Naive thymus-derived CD4-positive, alpha-beta T cell (primary cell): ENCODE measurements at regions of chr7 and their contacts with region 1.

Region 1: DNA sequence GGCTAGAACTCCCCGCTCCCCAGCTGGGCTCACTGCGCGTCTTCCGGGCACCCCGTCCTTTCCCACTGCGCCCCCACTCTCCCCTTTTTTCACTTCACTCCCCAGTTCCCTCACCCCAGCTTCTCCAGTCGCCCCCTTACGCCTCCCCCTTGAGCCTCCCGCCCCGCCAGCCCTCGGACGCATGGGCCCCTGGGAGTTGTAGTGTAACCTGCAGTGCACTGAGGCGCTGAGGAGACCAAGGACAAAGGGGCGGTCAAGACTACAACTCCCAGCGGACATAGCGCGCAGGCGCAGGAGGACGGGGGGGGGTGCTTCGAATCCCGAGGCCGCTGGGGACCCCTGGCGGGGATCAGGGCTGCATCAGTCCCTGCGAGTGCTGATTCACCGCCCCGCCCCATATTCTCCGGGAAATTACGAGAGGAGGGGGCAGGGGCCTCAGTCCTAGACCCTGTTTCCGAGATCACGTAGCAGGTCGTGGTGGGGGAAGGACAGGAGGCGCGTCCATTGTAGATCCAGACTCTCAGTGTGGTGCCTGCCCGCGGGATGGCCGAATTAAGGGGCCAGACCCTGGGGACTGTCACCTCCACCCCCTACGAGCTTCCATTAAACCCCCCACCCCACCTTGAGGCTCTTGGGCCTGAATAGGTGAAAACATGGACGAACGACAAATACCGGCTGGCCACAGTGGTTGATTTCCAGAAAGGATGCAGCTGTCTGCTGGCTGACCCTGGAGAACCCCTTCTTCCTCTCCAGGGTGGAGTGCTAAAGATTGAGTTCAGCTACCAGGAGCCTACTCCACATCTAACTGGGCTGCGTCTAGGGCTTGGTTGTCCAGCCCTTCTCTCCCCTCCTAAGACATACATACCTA is 554 bp upstream of the YWHAG start:
- DNase-seq: peak; percentile 87 to 96 (median 95)
- ATAC-seq: peak; percentile 94
- H3K4me3 ChIP-seq: peak overlapping the region; percentile 72
- H3K4me3 Mint-ChIP-seq: peak overlapping the region; percentile 84 to 99 (median 95)
- H3K27ac ChIP-seq: peak overlapping the region; percentile 92
- H3K27ac Mint-ChIP-seq: peak overlapping the region; percentile 66 to 99 (median 93)
- H3K4me1 ChIP-seq: peaks cover 4 to 31% of the 10 kb centered on the region in 2 donors
- H3K4me1 Mint-ChIP-seq: peaks cover 28 to 46% (median 43%) of the 10 kb centered on the region in 7 donors
- H3K27me3 ChIP-seq: no peaks in the 10 kb centered on the region
- H3K27me3 Mint-ChIP-seq: no peaks in the 10 kb centered on the region

Region 2: DNA sequence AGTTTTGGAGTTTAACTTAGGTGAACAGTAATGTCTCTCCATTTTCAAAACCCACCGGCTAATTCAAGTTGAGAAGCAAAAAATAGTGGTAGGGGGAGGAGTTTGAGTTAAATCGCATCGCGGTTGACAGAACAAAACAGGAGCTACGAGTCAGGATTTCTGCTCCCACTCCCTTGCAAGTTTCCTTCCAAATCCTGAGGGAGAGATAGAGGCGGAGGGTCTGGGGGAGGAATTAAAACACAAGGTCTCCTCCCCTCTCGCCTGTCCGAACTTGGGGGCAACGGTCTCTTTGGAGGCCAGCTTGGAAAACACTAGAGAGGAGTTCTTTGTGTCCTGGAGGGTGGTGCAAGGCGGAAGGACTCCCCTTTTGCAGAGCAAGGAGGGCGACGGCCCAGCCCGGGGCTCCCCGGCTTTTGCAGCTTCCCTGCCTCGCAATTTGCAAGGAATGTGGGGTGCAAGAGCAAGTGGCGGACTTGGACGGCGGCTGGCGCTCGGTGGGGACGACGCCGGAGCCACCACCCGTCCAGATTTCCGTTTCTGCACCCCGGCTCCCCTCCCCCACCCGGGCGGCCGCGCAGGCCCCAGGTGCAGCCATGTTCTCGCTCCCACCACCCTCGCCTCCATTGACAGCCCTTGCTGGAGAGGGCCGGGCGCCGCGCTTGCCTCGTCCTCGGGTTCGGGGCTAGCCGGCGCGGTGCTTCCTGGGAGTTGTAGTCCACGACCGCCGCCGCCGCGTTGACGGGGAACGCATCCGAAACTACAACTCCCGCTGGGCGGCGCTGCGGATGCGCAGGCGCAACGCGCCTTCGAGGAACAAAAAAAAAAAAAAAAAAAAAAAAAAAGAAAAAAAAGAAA is 1702.3 kb before region 1 on chr7:
- CTCF ChIA-PET with region 1: no interaction called
- POLR2A ChIA-PET with region 1: no interaction called
- intact Hi-C with region 1: loop called (anchors 5 kb)
- DNase-seq: peak; percentile 94 to 97 (median 97)
- ATAC-seq: peak; percentile 88
- H3K4me3 ChIP-seq: peak overlapping the region; percentile 96
- H3K4me3 Mint-ChIP-seq: peak overlapping the region; percentile 90 to 97 (median 94)
- H3K27ac ChIP-seq: peak overlapping the region; percentile 89
- H3K27ac Mint-ChIP-seq: peak overlapping the region; percentile 86 to 98 (median 94)
- H3K4me1 ChIP-seq: peaks cover 12 to 21% of the 10 kb centered on the region in 2 donors
- H3K4me1 Mint-ChIP-seq: peaks cover 35 to 55% (median 43%) of the 10 kb centered on the region in 7 donors
- H3K27me3 ChIP-seq: no peaks in the 10 kb centered on the region
- H3K27me3 Mint-ChIP-seq: peaks cover 0 to 2% (median 0%) of the 10 kb centered on the region in 5 donors

Region 3: GRCh38 chr7:75914730-75915585 is 444.4 kb before region 1 on chr7 and contains the start of gene POR:
- CTCF ChIA-PET with region 1: no interaction called
- POLR2A ChIA-PET with region 1: no interaction called
- intact Hi-C with region 1: loop called in 1 of 2 experiments (anchors 1 kb)
- DNase-seq: peak; percentile 93 to 100 (median 99)
- ATAC-seq: peak; percentile 99
- H3K4me3 ChIP-seq: peak within 1 kb of the TSS; percentile 79
- H3K4me3 Mint-ChIP-seq: peak within 1 kb of the TSS; percentile 91 to 94 (median 92)
- H3K27ac ChIP-seq: peak within 1 kb of the TSS; percentile 100
- H3K27ac Mint-ChIP-seq: peak within 1 kb of the TSS; percentile 94 to 99 (median 98)
- H3K4me1 ChIP-seq: peaks cover 12 to 19% of the 10 kb centered on the region in 2 donors
- H3K4me1 Mint-ChIP-seq: peaks cover 18 to 50% (median 35%) of the 10 kb centered on the region in 7 donors
- H3K27me3 ChIP-seq: no peaks in the 10 kb centered on the region
- H3K27me3 Mint-ChIP-seq: peaks cover 0 to 3% (median 0%) of the 10 kb centered on the region in 5 donors
- total RNA-seq, gene POR: 45.9 to 72.3 (median 69.7) TPM

Region 4: GRCh38 chr7:76166404-76167255 is 192.7 kb before region 1 on chr7:
- CTCF ChIA-PET with region 1: no interaction called
- POLR2A ChIA-PET with region 1: no interaction called
- intact Hi-C with region 1: loop called (anchors 1 kb)
- DNase-seq: peak; percentile 90 to 95 (median 94)
- ATAC-seq: peak; percentile 96
- H3K4me3 ChIP-seq: peak overlapping the region; percentile 96
- H3K4me3 Mint-ChIP-seq: peak overlapping the region; percentile 84 to 92 (median 90)
- H3K27ac ChIP-seq: peak overlapping the region; percentile 84
- H3K27ac Mint-ChIP-seq: peak overlapping the region; percentile 79 to 99 (median 97)
- H3K4me1 ChIP-seq: peaks cover 0 to 4% of the 10 kb centered on the region in 2 donors
- H3K4me1 Mint-ChIP-seq: peaks cover 0 to 14% (median 6%) of the 10 kb centered on the region in 7 donors
- H3K27me3 ChIP-seq: no peaks in the 10 kb centered on the region
- H3K27me3 Mint-ChIP-seq: no peaks in the 10 kb centered on the region

Region 5: GRCh38 chr7:76291343-76292212 is 67.8 kb before region 1 on chr7:
- CTCF ChIA-PET with region 1: interaction called, 4 read pairs
- POLR2A ChIA-PET with region 1: no interaction called
- intact Hi-C with region 1: loop called (anchors 1 kb)
- DNase-seq: peak; percentile 59 to 93 (median 75)
- ATAC-seq: peak; percentile 89
- H3K4me3 ChIP-seq: no peak overlapping the region
- H3K4me3 Mint-ChIP-seq: peak overlapping the region in 1 of 10 donors; percentile 38
- H3K27ac ChIP-seq: no peak overlapping the region
- H3K27ac Mint-ChIP-seq: peak overlapping the region in 4 of 9 donors; percentile 32 to 82 (median 72)
- H3K4me1 ChIP-seq: no peaks in the 10 kb centered on the region
- H3K4me1 Mint-ChIP-seq: peaks cover 0 to 20% (median 5%) of the 10 kb centered on the region in 7 donors
- H3K27me3 ChIP-seq: no peaks in the 10 kb centered on the region
- H3K27me3 Mint-ChIP-seq: peaks cover 0 to 6% (median 0%) of the 10 kb centered on the region in 5 donors

Region 6: DNA sequence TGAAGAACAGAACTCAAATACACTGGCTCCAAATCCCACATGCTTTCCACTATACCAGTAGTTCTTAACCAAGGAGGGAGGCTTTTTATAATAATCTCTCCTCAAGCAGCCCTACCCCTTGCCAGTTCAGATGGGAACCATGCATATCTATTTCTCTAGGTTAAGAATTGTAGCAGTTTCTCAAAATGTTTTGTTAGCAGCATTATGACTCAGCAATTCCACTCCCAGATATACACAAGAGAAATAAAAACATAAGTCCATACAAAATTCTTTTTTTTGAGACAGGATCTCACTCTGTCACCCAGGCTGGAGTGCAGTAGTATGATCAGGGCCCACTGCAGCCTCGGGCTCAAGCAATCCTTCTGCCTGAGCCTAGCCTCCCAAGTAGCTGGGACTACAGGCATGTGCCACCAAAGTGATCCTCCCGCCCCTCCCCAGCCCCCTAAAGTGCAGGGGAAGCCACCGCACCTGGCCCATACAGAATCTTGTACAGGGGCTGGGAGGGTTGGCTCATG is 18.7 kb before region 1 on chr7:
- CTCF ChIA-PET with region 1: no interaction called
- POLR2A ChIA-PET with region 1: interaction called, 3 read pairs
- intact Hi-C with region 1: loop called (anchors 2 kb)
- DNase-seq: no peak
- ATAC-seq: no peak
- H3K4me3 ChIP-seq: no peak overlapping the region
- H3K4me3 Mint-ChIP-seq: no peak overlapping the region
- H3K27ac ChIP-seq: no peak overlapping the region
- H3K27ac Mint-ChIP-seq: peak overlapping the region in 2 of 9 donors; percentile 9 to 39
- H3K4me1 ChIP-seq: no peaks in the 10 kb centered on the region
- H3K4me1 Mint-ChIP-seq: peaks cover 54 to 80% (median 65%) of the 10 kb centered on the region in 7 donors
- H3K27me3 ChIP-seq: no peaks in the 10 kb centered on the region
- H3K27me3 Mint-ChIP-seq: no peaks in the 10 kb centered on the region

Region 7: DNA sequence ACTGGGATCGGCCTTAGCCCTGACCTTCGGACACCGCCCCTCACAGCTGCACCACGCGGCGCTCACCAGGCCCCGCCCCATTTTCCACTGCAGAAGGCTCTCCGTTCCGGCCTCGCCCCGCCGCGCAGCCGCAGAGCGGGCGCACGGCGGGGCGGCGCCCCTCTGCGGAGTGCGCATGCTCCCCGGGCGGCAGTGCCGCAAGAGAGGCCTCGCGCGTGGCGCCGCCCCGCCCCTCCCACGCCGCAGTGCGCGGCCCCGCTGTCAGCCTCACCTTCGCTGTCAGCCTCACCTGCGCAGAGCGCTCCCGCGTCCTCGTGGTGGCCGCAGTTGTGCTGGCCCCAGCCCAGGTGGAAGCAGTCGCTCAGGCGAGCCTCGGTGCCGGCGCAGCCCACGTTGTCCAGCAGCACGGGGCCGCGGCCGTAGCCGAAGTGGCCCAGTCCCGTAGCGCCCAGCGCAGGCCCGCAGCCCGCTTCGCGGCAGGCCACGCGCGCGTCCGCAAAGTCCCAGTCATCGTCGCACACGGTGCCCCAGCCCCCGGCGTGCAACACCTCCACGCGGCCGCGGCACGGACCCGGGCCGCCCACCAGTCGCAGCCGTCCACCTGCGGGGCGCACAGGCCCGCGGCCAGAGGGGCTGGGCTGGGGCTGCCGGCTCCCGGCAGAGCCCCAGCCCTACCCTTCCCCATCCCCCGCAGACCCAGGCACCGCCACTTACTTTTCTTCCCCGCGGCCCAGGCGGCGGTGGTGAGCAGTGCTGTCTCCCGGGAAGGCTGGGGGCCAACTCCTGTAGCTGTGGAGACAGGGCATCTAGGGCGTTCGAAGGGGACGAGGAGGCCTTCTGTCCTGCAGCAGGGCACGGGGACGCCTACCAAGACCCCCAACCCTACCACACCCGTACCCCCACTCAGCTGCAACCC is 34.0 kb after region 1 on chr7:
- CTCF ChIA-PET with region 1: interaction called, 3 read pairs
- POLR2A ChIA-PET with region 1: interaction called, 39 read pairs
- intact Hi-C with region 1: loop called (anchors 1 kb)
- DNase-seq: peak; percentile 86 to 96 (median 92)
- ATAC-seq: peak; percentile 89
- H3K4me3 ChIP-seq: peak overlapping the region; percentile 84
- H3K4me3 Mint-ChIP-seq: peak overlapping the region; percentile 78 to 93 (median 90)
- H3K27ac ChIP-seq: peak overlapping the region; percentile 74
- H3K27ac Mint-ChIP-seq: peak overlapping the region; percentile 86 to 97 (median 95)
- H3K4me1 ChIP-seq: peaks cover 14 to 20% of the 10 kb centered on the region in 2 donors
- H3K4me1 Mint-ChIP-seq: peaks cover 8 to 29% (median 23%) of the 10 kb centered on the region in 7 donors
- H3K27me3 ChIP-seq: no peaks in the 10 kb centered on the region
- H3K27me3 Mint-ChIP-seq: no peaks in the 10 kb centered on the region

Region 8: DNA sequence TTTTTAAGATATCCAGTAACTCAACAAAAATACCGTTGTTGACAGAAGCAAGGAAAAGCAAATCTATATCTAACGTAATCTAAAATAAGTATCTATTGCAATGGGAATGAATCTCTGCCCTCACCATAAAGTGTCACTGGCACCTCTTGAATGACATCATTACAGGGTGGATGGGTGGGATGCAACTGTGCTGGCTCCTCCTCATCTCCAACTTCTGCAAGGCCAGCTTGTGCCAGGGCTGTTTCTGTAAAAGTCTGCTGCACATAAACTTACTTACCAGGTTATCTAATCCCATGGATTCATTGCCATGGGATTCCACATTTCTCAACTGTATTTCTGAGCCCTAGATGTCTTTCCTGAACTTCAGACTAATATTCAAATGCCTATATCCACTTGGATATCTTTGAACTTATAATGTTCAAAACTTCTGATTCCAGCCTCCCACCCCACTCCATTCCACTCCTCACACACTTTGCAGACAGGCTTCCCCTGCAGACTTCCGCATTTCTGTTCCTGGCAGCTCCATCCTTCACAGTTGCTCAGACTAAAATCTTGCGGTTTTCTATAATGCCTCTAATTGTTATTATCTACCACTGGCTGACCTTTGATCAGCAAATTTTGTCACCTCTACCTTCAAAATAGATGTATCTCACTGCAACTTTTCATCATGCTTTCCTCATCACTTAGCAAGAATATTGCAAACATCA is 829.5 kb after region 1 on chr7:
- CTCF ChIA-PET with region 1: no interaction called
- POLR2A ChIA-PET with region 1: no interaction called
- intact Hi-C with region 1: no loop called
- DNase-seq: no peak
- ATAC-seq: peak; percentile 58
- H3K4me3 ChIP-seq: no peak overlapping the region
- H3K4me3 Mint-ChIP-seq: no peak overlapping the region
- H3K27ac ChIP-seq: no peak overlapping the region
- H3K27ac Mint-ChIP-seq: no peak overlapping the region
- H3K4me1 ChIP-seq: peaks cover 6 to 7% of the 10 kb centered on the region in 2 donors
- H3K4me1 Mint-ChIP-seq: peaks cover 0 to 19% (median 15%) of the 10 kb centered on the region in 7 donors
- H3K27me3 ChIP-seq: no peaks in the 10 kb centered on the region
- H3K27me3 Mint-ChIP-seq: no peaks in the 10 kb centered on the region